ENCODE measurements at regions of chr9 and their contacts with region 1.

Region 1: DNA sequence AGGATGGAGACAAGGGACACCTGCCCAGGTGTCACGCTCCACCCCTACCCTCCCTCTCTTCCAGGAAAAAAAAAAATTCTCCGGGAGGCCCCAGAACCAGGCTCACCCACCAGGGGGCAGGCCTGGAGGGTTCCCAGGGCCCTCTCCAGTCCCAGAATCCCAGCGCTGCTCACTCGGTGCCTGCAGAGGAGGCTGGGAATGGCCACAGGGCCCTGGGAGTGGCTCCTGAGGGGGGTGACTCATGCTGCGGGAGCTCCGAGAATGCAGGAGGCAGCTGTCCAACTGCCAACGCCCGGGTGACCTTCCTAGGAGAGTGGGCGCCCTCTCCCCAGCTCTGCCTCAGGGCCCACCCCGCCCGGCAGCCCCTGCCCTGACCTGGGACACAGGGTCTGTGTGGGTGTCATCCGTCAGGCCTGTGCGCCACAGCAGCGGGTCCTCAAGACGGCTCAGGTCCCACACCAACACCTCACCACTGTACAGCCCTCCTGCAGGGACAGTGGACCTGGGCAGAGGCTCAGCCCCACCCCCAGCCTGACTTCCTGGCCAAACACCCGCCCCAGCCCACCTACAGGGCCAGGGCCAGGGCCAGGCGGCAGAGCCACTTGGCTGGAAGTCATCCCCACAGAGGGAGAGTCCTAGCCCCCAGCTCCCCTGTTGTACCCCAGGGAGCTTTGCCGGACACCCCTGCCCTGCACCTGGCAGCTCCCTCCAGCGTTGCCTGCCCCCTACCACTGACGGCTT is 21.2 kb downstream of the DYNC2I2 start:
- DNase-seq: peak; percentile 95 to 100
- H3K4me3 ChIP-seq: peak overlapping the region; percentile 50
- H3K27ac ChIP-seq: peak overlapping the region; percentile 93
- H3K4me1 ChIP-seq: peaks cover 32% of the 10 kb centered on the region
- H3K27me3 ChIP-seq: no peaks in the 10 kb centered on the region
- CTCF ChIP-seq: peak; percentile 92

Region 2: DNA sequence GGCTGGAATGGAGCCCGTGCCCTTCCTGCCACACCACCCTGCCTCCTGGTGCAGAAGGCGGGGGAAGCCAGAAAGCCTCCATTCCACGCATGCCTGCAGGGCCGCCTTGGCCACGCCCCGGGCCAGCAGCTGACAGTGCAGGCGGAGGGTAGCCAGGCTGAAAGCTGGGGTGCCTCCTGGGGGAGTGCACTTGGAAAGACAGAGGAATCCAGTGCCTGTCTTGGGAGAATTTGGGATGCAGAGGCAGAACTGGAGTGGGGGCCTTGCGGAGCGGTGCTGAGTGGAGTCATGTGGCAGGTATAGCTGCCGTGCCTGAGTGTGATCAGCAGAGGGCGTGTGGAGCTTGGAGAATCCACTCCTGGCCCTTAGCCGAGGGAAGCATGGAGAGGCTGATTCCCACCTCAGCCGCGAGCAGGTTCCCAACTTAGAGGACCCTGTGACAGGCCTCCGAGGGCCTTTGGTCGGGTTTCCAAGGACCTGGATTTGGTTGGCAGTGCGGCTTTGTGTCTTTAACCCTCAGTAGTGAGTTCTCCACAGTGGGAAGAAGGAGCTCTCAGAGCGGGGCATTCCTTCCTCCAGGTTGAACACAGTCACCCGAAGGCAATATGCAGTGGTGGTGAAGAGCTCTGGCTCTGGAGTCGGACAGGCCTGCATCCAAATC is 273.3 kb before region 1 on chr9:
- CTCF ChIA-PET with region 1: no interaction called
- POLR2A ChIA-PET with region 1: no interaction called
- intact Hi-C with region 1: loop called (anchors 5 kb)
- DNase-seq: peak in 1 of 2 experiments; percentile 87
- H3K4me3 ChIP-seq: peak overlapping the region; percentile 53; the same call in 1 of the 2 replicates
- H3K27ac ChIP-seq: no peak overlapping the region
- H3K4me1 ChIP-seq: peaks cover 12% of the 10 kb centered on the region
- H3K27me3 ChIP-seq: no peaks in the 10 kb centered on the region
- CTCF ChIP-seq: peak; percentile 88

Region 3: GRCh38 chr9:128568470-128569078 is 66.9 kb before region 1 on chr9:
- CTCF ChIA-PET with region 1: no interaction called
- POLR2A ChIA-PET with region 1: no interaction called
- intact Hi-C with region 1: no loop called
- DNase-seq: no peak
- H3K4me3 ChIP-seq: no peak overlapping the region
- H3K27ac ChIP-seq: no peak overlapping the region
- H3K4me1 ChIP-seq: no peaks in the 10 kb centered on the region
- H3K27me3 ChIP-seq: no peaks in the 10 kb centered on the region
- CTCF ChIP-seq: no peak

Region 4: DNA sequence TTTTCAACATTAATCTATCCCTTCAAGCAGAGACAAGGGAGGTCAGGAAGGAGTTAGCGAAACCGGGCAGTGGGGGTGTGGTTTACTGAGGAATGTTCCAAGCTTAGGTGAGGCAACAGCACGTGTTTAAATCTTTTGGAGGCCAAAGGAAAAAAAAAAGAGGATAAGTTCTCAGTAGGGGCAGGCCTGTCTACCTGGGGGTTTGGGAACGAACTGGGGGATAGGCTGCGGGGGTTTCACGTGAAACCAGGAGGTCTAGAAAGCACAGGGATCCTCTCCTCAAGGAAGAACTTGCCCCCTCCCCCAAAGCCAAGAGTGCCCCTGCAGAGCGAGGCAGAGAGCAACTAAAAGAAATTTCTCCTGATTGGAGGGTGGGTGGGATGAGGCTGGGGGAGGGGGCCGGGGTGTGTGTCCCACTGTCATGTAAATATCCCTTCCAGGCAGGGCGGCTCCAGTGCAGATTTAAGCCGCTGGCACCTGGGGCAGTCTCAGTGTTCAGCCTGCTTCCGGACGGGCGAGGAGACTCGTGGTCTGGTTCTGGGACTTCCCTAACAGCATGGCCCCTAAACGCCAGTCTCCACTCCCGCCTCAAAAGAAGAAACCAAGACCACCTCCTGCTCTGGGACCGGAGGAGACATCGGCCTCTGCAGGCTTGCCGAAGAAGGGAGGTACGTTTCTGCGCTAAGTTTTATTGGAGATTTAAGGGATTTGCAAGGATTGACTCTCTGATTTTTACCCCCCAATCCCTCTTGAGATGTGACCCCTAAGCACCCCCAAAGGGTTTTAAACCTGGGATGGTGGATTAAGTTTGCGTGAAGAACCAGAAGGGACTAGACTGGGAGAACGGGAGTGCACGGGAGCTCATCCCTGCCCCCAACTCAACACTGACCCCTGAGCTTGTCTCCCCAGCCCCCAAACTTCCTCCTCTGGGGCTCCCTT is 48.2 kb after region 1 on chr9:
- CTCF ChIA-PET with region 1: interaction called, 5 read pairs
- POLR2A ChIA-PET with region 1: interaction called, 20 read pairs
- intact Hi-C with region 1: loop called (anchors 1 kb)
- DNase-seq: peak; percentile 75 to 88
- H3K4me3 ChIP-seq: peak overlapping the region; percentile 94
- H3K27ac ChIP-seq: peak overlapping the region; percentile 99
- H3K4me1 ChIP-seq: peaks cover 45% of the 10 kb centered on the region
- H3K27me3 ChIP-seq: no peaks in the 10 kb centered on the region
- CTCF ChIP-seq: no peak

Region 5: DNA sequence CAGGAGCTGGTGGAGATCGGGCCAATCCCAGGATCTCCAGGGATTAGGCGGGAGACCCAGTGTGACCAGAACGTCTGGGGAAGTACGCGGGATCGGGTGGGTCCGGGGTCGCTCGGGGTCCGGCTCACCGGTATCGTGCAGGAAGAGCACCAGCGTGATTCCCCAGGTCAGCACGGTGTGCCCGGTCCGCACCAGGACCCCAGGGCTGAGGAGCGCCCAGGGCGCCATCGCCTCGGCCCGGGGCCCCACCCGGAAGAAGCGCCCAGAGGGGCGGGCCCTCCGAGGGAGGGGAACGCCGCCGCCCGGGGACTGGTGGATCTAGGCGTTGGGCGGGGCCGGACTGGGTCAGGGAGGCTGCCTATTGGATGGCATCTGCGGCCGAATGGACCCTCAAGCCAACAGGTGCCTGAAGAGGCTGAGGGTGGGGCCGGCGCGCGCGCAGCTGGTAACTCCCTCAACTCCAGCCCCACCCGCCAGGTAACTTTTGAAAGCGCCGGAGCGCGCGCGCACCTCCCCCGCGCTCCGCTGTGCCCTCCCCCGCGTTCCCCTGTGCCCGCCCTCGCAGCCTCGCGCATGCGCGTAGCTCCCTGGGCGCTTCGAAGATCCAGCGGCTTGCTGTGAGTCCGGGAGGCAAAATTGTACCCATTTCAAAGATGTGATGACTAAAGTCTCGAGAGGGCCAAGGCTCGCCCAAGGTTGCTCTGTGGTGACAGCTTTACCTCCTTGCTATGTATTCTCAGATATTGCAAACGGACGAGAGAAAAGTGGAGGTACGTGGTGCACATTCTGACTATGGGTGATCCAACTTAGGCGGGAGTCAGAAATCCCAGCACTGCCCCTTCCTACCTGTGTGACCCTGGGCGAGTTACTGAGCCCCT is 88.7 kb after region 1 on chr9 and contains the start of gene ZDHHC12:
- CTCF ChIA-PET with region 1: no interaction called
- POLR2A ChIA-PET with region 1: no interaction called
- intact Hi-C with region 1: loop called (anchors 1 kb)
- DNase-seq: peak; percentile 95 to 100
- H3K4me3 ChIP-seq: peak within 1 kb of the TSS; percentile 80
- H3K27ac ChIP-seq: no peak within 1 kb of the TSS
- H3K4me1 ChIP-seq: no peaks in the 10 kb centered on the region
- H3K27me3 ChIP-seq: no peaks in the 10 kb centered on the region
- CTCF ChIP-seq: no peak
- total RNA-seq, gene ZDHHC12: 102 and 133 TPM in 2 replicates

Region 6: DNA sequence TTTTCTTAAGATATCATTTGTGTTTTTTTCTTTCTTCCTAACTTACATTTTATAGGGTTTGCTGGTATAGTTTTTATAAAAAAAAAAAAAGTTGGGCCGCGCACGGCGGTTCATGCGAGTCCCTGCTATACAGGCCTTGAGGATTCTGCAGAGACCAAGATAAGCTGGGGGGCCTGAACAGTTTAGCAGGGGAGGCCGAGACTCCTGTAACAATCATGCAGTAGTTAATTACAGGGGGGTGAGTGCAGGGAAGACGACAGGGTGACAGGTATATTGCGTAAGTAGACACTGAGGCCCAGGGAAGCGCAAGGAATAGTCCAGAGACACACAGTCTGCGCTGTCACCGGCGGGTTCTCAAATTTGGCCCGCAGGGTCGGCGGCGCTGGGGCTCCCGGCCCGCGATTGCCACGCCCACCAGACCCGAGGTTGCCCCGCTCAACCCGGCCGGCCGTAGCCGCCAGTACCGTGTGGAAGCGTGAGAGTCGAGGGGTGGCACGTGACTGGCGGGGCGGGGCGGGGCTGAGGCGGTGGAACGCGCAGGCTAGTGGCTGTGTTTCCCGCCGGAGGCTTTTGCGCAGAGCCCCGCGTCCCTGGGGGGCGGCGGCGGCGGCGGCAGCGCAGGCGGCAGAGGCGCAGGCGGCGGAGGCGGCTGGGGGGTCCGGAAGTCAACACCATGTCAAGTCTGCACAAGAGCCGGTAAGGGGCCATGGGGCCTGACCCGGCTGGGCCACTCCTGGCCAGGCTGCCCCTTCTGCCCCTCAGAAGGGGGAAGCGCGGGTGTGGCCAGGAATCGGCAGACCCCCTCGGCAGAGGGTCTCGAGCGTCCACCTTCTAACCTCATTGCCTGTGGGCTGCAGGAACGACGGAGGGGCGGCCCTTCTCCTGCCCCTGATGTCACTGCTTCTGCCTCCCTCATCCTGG is 151.5 kb after region 1 on chr9 and contains the start of gene TBC1D13:
- CTCF ChIA-PET with region 1: no interaction called
- POLR2A ChIA-PET with region 1: no interaction called
- intact Hi-C with region 1: loop called (anchors 2 kb)
- DNase-seq: peak; percentile 71 to 88
- H3K4me3 ChIP-seq: peak within 1 kb of the TSS; percentile 96
- H3K27ac ChIP-seq: peak within 1 kb of the TSS; percentile 43
- H3K4me1 ChIP-seq: peaks cover 16% of the 10 kb centered on the region
- H3K27me3 ChIP-seq: no peaks in the 10 kb centered on the region
- CTCF ChIP-seq: no peak
- total RNA-seq, gene TBC1D13: 38.2 and 41.9 TPM in 2 replicates

Region 7: GRCh38 chr9:128987805-128988204 is 352.4 kb after region 1 on chr9:
- CTCF ChIA-PET with region 1: no interaction called
- POLR2A ChIA-PET with region 1: interaction called, 17 read pairs
- intact Hi-C with region 1: no loop called
- DNase-seq: no peak
- H3K4me3 ChIP-seq: no peak overlapping the region
- H3K27ac ChIP-seq: no peak overlapping the region
- H3K4me1 ChIP-seq: no peaks in the 10 kb centered on the region
- H3K27me3 ChIP-seq: no peaks in the 10 kb centered on the region
- CTCF ChIP-seq: no peak